Left lung (tissue), 14 donors: ENCODE measurements at regions of chr6 and their contacts with region 1.

Region 1: DNA sequence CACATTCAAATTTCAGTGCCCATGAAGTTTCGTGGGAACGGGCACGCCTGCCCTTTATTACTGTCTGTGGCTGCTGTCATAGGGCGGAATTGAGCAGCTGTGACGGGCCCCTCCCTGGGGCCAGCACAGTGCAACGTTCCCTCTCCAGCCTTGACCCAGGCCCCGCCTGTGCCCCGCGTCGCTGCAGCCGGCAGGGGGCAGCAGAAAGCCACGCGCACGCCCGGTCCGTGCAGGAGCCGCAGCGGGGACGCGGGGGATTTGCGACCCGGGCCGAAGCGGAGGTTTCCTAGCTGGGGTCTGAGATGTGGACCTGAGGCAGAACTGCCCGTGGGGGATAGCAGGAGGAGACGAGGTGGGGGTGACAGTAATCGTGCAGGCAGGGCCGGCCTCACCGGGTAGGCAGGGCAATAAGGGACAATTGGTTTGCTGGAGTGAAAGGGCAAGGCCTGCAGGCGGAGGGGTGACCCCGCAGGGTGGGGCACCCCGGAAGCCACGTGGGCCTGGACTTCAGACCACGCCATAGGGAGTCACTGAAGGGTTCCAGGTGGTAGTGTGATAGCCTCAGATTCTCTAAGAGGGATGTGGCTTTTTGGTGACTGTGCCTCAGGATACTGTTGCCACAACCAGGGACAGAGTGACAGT is 54.4 kb downstream of the SYTL3 start:
- DNase-seq: peak; percentile 68 to 97 (median 85)
- ATAC-seq: peak; percentile 92
- H3K4me3 ChIP-seq: peak overlapping the region; percentile 25
- H3K27ac ChIP-seq: no peak overlapping the region
- H3K4me1 ChIP-seq: peaks cover 24 to 35% of the 10 kb centered on the region in 2 donors
- H3K27me3 ChIP-seq: no peaks in the 10 kb centered on the region
- CTCF ChIP-seq: peak; percentile 98 to 99

Region 2: DNA sequence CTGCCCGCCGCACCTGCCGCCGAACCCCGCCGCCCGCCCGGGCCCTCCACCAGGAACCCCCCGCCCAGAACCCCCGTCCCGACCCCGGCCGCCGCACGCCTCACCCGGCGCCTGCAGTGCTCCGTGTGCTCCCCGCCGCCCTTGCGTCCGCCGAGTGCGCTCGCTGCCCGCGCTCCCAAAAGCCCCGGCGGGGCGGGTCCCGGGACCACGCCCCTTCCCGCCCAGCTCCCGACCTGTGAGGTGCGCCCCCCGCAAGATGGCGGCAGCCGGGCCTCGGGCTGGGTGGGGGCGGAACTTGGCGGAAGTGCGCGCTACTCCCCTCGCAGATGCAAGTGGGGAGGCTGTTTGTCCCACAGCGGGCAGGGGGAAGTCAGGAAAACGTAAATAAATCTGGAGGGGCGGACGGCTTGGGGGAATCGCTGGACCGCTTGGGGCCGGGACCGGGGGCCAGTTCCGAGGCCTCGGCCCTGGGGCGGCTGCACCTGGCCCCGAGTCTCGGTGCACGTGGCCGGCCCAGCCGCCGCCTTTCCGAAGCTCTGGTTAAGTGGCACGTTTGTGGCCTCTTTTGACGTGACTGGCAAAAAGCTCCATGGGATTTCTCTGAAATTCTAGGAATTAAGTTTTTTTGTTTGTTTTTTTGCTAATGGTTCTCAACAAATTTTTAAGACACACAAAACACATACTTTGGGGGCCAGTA is 115.1 kb after region 1 on chr6 and contains the start of gene EZR:
- intact Hi-C with region 1: no loop called
- DNase-seq: peak in 3 of 4 donors; percentile 85 to 95 (median 91)
- ATAC-seq: peak; percentile 69
- H3K4me3 ChIP-seq: peak within 1 kb of the TSS; percentile 80 to 86
- H3K27ac ChIP-seq: peak within 1 kb of the TSS; percentile 92 to 98
- H3K4me1 ChIP-seq: peaks cover 7 to 29% of the 10 kb centered on the region in 2 donors
- H3K27me3 ChIP-seq: no peaks in the 10 kb centered on the region
- CTCF ChIP-seq: no peak
- polyA plus RNA-seq, gene EZR: 140 to 168 (median 154) TPM

Region 3: DNA sequence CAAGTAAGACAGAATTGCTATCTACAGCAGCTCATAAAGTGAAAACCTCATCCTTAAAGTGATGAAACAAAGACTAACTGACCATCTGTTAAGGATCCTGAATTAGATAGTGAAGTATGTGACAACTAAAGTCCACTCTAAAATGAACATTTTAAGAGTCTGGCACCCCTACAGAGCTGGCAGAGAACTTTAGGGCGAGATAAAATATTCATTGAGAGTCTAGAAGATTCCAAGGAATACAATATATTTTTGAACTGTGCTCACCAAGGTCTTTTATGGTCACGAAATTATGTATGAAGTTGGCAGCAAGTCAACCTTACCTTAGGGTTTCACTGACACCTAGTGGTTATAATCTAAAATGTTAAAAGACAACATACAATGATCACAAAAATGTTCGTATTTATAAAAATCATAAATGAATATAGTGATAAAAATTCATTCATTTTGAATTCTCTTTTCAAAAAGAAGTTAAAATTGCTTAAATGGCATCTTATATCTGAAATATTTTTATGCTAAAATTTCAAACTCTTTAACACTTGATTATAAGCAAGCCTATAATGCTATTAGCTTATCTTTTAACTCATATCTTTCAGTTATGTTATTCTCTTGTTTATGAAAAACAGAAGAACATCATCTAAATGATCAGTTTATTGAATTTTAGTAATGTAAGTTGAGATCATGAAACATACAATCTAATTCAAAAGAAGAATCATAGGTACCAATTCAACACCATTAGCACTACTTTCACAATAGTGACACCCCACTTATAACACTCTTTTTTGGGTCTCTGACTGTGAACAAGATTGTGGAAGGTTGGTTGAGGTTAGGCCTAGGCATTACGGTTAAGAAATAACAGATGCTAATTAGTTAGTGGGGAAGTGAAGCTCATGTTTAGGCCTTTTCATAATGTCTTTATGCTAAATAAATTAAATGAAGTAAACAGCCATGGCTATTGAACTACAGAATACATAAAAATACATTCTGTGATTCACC is 268.2 kb after region 1 on chr6:
- intact Hi-C with region 1: loop called in 1 of 2 experiments (anchors 5 kb)
- DNase-seq: peak in 2 of 4 donors; percentile 47 to 64
- ATAC-seq: peak; percentile 85
- H3K4me3 ChIP-seq: no peak overlapping the region
- H3K27ac ChIP-seq: no peak overlapping the region
- H3K4me1 ChIP-seq: no peaks in the 10 kb centered on the region
- H3K27me3 ChIP-seq: no peaks in the 10 kb centered on the region
- CTCF ChIP-seq: peak; percentile 52